SK-N-SH (cell line): ENCODE measurements at regions of chrX and their contacts with region 1.

Region 1: DNA sequence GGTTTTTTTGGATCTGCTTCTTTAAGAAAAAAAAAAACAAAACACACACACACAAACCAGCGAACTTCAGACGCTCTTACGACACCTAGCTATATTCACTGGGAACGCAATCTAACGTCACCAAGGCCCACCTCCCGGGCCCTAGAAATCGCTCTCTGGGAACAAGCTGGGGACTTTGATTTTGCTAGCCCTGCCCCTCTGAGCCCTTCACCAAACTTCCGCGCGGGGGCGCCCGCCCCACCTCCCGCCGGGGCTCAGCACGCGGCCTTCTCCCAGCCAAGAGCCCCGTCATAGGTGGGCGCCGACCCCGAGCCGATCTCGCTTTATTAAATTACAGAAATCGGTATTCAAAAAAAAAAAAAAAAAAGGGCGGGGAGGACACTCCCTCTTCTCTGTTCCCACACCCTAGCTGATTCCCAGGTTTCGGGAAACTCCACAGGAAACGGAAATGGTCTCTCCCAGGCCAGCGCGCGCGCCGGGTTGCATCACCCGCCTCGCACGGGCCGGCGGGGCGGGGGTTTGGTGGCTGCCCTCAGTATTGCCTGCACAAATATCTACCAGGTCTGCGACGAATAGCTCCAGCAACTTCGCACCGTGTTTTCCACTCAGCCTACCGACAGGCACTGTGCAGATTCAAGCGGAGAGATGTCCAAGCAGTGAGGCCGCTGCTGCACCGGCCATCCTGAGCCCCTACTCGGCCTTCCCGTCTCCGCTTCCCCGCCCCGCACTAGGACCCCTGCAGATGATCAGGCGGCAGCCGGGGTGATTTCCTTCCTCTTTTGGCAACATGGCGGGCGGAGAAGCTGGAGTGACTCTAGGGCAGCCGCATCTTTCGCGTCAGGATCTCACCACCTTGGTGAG is at the start of gene EIF2S3:
- DNase-seq: peak; percentile 93
- H3K4me3 ChIP-seq: no peak within 1 kb of the TSS; a peak in 2 of 4 replicates
- H3K27ac ChIP-seq: peak within 1 kb of the TSS in 1 of 2 experiments; percentile 97; a peak in 3 of 4 replicates
- H3K4me1 ChIP-seq: peaks cover 0 to 6% of the 10 kb centered on the region in 2 experiments; a peak in 1 of 4 replicates
- H3K27me3 ChIP-seq: no peaks in the 10 kb centered on the region
- CTCF ChIP-seq: peak; percentile 78
- EP300 ChIP-seq: no peak; a peak in 1 of 4 replicates
- RAD21 ChIP-seq: peak; percentile 64
- polyA plus RNA-seq, gene EIF2S3: 68.4 and 109 TPM in 2 replicates

Region 2: DNA sequence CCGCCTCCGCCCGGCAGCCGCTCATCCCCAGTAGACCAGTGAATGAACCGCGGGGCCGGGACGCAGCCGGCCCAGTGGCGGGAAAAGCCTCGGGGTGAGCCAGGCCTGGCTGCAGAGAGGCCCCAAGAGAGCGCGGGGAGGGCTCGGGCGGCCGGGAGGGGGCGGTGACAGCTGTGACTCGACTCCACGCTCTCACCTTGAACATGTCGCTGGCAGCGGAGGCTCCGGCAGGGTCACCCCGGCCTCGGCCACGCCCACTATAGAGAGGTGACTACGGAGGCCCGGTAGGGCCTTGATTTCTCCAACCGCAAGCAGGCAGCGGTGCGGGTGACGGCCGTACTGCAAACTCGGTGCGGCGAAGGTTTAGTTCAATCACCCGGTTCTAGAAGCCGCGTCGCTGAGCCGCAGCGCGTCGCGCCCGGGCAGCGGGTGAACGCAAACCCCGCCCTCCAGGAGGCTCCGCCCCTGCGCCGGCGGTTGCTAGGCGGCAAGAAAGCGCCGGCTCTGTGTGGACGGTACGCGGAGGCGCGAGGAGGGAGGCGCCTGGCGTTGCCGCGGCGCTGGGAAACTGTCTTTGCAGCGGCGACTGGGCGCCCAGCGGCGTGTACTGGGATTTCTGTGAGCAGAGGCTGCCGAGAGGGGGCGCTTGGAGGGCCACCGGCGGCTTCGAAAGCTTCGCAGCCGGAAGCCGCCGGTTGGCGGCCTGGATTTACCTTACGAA is 146.8 kb before region 1 on chrX and contains the starts of genes APOO and CXorf58:
- CTCF ChIA-PET with region 1: interaction called, 18 read pairs
- POLR2A ChIA-PET with region 1: interaction called, 11 read pairs
- DNase-seq: peak; percentile 88
- H3K4me3 ChIP-seq: peak within 1 kb of the TSS; percentile 63 to 67
- H3K27ac ChIP-seq: peak within 1 kb of the TSS; percentile 81 to 83
- H3K4me1 ChIP-seq: no peaks in the 10 kb centered on the region; a peak in 2 of 4 replicates
- H3K27me3 ChIP-seq: no peaks in the 10 kb centered on the region
- CTCF ChIP-seq: peak; percentile 69
- EP300 ChIP-seq: peak in 1 of 2 experiments; percentile 31; a peak in 1 of 4 replicates
- RAD21 ChIP-seq: peak; percentile 51
- polyA plus RNA-seq, gene APOO: 20.3 and 22.0 TPM in 2 replicates
- polyA plus RNA-seq, gene CXorf58: not detected in 2 replicates

Region 3: DNA sequence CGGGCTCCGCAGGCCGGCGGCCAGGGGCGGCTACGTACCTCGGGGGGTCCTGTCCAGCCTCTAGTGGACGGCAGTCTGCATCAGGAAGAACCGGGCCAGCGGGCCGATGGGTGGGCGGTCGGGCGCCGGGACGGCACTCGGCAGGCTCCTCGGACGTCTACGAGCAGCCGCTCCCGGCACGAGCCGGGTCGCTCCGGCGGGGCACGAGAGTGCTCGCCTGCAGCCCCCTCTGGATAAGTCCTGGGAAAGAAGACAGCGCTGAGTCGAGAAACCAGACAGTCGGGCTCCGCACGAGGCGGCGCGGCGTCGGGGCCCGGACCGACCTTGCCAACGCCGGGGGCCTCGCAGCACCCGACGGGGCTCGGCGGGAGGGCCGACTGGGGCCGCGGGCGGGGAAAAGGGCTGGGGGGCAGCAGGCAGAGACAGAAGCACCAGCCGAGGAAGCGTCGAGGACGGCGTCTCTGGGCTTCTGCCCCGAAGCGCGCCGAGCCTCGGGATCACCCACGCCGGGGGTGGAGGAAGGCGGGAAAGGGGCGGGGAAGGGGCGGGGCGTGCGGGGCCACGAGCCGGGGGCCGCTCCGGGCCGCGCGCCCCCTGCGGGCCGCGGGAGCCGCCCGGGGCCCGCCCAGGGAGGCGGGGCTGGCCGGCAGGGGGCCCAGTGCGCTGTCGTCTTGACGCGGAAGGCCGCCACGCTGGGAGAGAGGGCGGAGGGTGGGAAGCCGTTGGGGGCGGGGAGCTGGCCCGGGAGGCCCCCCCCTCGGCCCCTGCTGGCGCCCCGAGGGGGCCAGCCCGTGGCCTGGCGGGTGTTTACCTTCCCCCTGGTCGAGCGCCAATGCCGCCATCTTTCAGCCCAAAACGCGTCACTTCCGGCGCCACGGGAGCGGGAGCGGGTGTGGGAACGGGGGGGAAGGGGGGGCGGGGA is 29.3 kb before region 1 on chrX:
- CTCF ChIA-PET with region 1: interaction called, 18 read pairs
- POLR2A ChIA-PET with region 1: interaction called, 25 read pairs
- DNase-seq: peak; percentile 91
- H3K4me3 ChIP-seq: peak overlapping the region; percentile 63 to 76
- H3K27ac ChIP-seq: peak overlapping the region; percentile 91 to 94
- H3K4me1 ChIP-seq: no peaks in the 10 kb centered on the region; a peak in 1 of 4 replicates
- H3K27me3 ChIP-seq: no peaks in the 10 kb centered on the region
- CTCF ChIP-seq: no peak
- EP300 ChIP-seq: peak; percentile 8 to 50; a peak in 1 of 4 replicates
- RAD21 ChIP-seq: no peak

Region 4: GRCh38 chrX:24167719-24168472 is 113.5 kb after region 1 on chrX:
- CTCF ChIA-PET with region 1: no interaction called
- POLR2A ChIA-PET with region 1: no interaction called
- DNase-seq: no peak
- H3K4me3 ChIP-seq: no peak overlapping the region
- H3K27ac ChIP-seq: peak overlapping the region in 1 of 2 experiments; percentile 40; a peak in 2 of 4 replicates
- H3K4me1 ChIP-seq: peaks cover 0 to 24% of the 10 kb centered on the region in 2 experiments; a peak in 3 of 4 replicates
- H3K27me3 ChIP-seq: no peaks in the 10 kb centered on the region
- CTCF ChIP-seq: no peak
- EP300 ChIP-seq: no peak
- RAD21 ChIP-seq: no peak